ENCODE measurements at regions of chr6 and their contacts with region 1.

Region 1: GRCh38 chr6:30828027-30828960 is 56.0 kb upstream of the DDR1 start:
- DNase-seq: peak; percentile 84
- H3K4me3 Mint-ChIP-seq: peak overlapping the region; percentile 80
- H3K27ac Mint-ChIP-seq: peak overlapping the region; percentile 51
- H3K4me1 Mint-ChIP-seq: peaks cover 60% of the 10 kb centered on the region
- H3K27me3 Mint-ChIP-seq: no peaks in the 10 kb centered on the region

Region 2: DNA sequence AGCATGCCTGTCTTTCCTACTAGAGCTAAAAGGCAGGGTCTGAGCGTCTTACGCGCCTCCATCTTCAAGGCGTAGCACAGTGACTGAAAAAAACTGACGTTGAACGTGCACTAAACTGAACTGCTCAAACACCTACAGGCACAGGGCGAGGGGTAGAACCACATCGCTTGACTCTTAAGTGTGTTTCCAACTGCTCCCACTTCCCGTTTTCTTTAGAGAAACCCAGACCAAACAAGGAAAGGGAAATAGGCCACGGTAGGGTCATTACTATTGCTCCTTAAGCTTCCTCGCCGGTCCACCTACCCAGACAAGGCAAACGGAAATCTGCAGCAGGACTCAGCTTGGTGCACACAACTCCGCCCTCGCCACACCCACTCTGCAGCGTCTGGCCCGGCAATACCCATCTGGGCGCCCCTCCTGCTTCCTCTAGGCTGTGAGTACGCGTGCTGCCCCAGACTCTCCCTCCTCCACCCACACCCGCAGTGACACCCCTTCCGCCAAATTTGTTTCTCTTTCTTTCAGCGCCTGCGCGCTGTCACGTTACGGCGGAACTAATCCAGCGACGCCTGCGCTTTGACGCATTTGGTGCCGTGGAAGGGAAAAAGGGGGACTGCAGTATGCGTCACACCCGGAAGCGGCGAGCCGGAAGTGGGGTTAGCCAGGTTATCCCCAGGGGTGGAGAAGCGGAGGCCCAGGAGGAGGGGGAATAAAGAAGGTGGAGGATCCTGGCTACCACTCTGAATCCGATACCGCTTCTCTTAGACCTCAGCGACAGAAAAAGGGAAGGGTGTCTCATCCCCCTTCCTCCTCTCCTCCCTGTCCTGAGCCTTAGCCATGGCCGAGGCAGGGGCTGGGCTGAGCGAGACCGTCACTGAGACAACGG is 761.5 kb before region 1 on chr6 and contains the start of gene PPP1R11:
- CTCF ChIA-PET with region 1: no interaction called
- POLR2A ChIA-PET with region 1: no interaction called
- DNase-seq: peak; percentile 99
- H3K4me3 Mint-ChIP-seq: peak within 1 kb of the TSS; percentile 93
- H3K27ac Mint-ChIP-seq: peak within 1 kb of the TSS; percentile 96
- H3K4me1 Mint-ChIP-seq: peaks cover 56% of the 10 kb centered on the region
- H3K27me3 Mint-ChIP-seq: peaks cover 8% of the 10 kb centered on the region
- total RNA-seq, gene PPP1R11: 57.9 to 73.7 TPM

Region 3: GRCh38 chr6:30844091-30844535 is 15.8 kb after region 1 on chr6:
- CTCF ChIA-PET with region 1: interaction called, 14 read pairs
- POLR2A ChIA-PET with region 1: no interaction called
- DNase-seq: no peak
- H3K4me3 Mint-ChIP-seq: no peak overlapping the region
- H3K27ac Mint-ChIP-seq: no peak overlapping the region
- H3K4me1 Mint-ChIP-seq: peaks cover 20% of the 10 kb centered on the region
- H3K27me3 Mint-ChIP-seq: peaks cover 4% of the 10 kb centered on the region

Region 4: GRCh38 chr6:31079656-31080261 is 251.5 kb after region 1 on chr6:
- CTCF ChIA-PET with region 1: interaction called, 17 read pairs
- POLR2A ChIA-PET with region 1: no interaction called
- DNase-seq: peak; percentile 83
- H3K4me3 Mint-ChIP-seq: peak overlapping the region; percentile 10
- H3K27ac Mint-ChIP-seq: no peak overlapping the region
- H3K4me1 Mint-ChIP-seq: peaks cover 8% of the 10 kb centered on the region
- H3K27me3 Mint-ChIP-seq: peaks cover 8% of the 10 kb centered on the region

Region 5: GRCh38 chr6:31087494-31088089 is 259.3 kb after region 1 on chr6:
- CTCF ChIA-PET with region 1: interaction called, 18 read pairs
- POLR2A ChIA-PET with region 1: no interaction called
- DNase-seq: peak; percentile 90
- H3K4me3 Mint-ChIP-seq: no peak overlapping the region
- H3K27ac Mint-ChIP-seq: peak overlapping the region; percentile 58
- H3K4me1 Mint-ChIP-seq: peaks cover 11% of the 10 kb centered on the region
- H3K27me3 Mint-ChIP-seq: peaks cover 6% of the 10 kb centered on the region